ENCODE measurements at regions of chr15 and their contacts with region 1.

Region 1: GRCh38 chr15:97903971-97904572 is 56.4 kb upstream of the ARRDC4 start:
- DNase-seq: peak; percentile 70 to 84 (median 79)
- H3K4me3 ChIP-seq: no peak overlapping the region
- H3K27ac ChIP-seq: no peak overlapping the region
- H3K4me1 ChIP-seq: no peaks in the 10 kb centered on the region
- H3K27me3 ChIP-seq: peaks cover 15% of the 10 kb centered on the region
- CTCF ChIP-seq: peak; percentile 39 to 75 (median 63)
- POLR2A ChIP-seq: no peak

Region 2: GRCh38 chr15:98177924-98178592 is 274.0 kb after region 1 on chr15:
- intact Hi-C with region 1: loop called (anchors 5 to 10 kb)
- DNase-seq: peak; percentile 35 to 61 (median 55)
- H3K4me3 ChIP-seq: no peak overlapping the region
- H3K27ac ChIP-seq: no peak overlapping the region
- H3K4me1 ChIP-seq: no peaks in the 10 kb centered on the region
- H3K27me3 ChIP-seq: peaks cover 23% of the 10 kb centered on the region
- CTCF ChIP-seq: peak; percentile 45 to 85 (median 72)
- POLR2A ChIP-seq: no peak

Region 3: GRCh38 chr15:98292442-98293240 is 388.6 kb after region 1 on chr15:
- intact Hi-C with region 1: loop called in 1 of 2 experiments (anchors 5 kb)
- DNase-seq: peak in 5 of 7 donors; percentile 27 to 44 (median 38)
- H3K4me3 ChIP-seq: no peak overlapping the region
- H3K27ac ChIP-seq: no peak overlapping the region
- H3K4me1 ChIP-seq: no peaks in the 10 kb centered on the region
- H3K27me3 ChIP-seq: peaks cover 46% of the 10 kb centered on the region
- CTCF ChIP-seq: peak; percentile 10 to 46 (median 38)
- POLR2A ChIP-seq: no peak

Measured in adrenal gland (tissue), 19 donors.